Activated B cell treated with CpG ODN at 0.5 μM for 24 hours (primary cell): ENCODE measurements at regions of chr13 and their contacts with region 1.

Region 1: GRCh38 chr13:40770934-40771618 is at the start of gene MRPS31:
- DNase-seq: peak; percentile 94
- ATAC-seq: peak; percentile 100
- H3K4me3 Mint-ChIP-seq: peak within 1 kb of the TSS; percentile 98
- H3K27ac Mint-ChIP-seq: peak within 1 kb of the TSS; percentile 94
- H3K4me1 Mint-ChIP-seq: peaks cover 30% of the 10 kb centered on the region
- H3K27me3 Mint-ChIP-seq: no peaks in the 10 kb centered on the region
- CTCF ChIP-seq: no peak
- total RNA-seq, gene MRPS31: 29.4 and 30.5 TPM in 2 replicates

Region 2: GRCh38 chr13:39037880-39038568 is 1733.1 kb before region 1 on chr13 and contains the starts of genes NHLRC3 and PROSER1:
- CTCF ChIA-PET with region 1: no interaction called
- POLR2A ChIA-PET with region 1: no interaction called
- intact Hi-C with region 1: loop called (anchors 1 kb)
- DNase-seq: peak; percentile 73
- ATAC-seq: peak; percentile 78
- H3K4me3 Mint-ChIP-seq: peak within 1 kb of the TSS; percentile 87
- H3K27ac Mint-ChIP-seq: peak within 1 kb of the TSS; percentile 99
- H3K4me1 Mint-ChIP-seq: peaks cover 47% of the 10 kb centered on the region
- H3K27me3 Mint-ChIP-seq: no peaks in the 10 kb centered on the region
- CTCF ChIP-seq: no peak
- total RNA-seq, gene NHLRC3: 17.3 and 24.6 TPM in 2 replicates
- total RNA-seq, gene PROSER1: 57.3 and 57.8 TPM in 2 replicates

Region 3: GRCh38 chr13:40401911-40402776 is 368.9 kb before region 1 on chr13:
- CTCF ChIA-PET with region 1: no interaction called
- POLR2A ChIA-PET with region 1: no interaction called
- intact Hi-C with region 1: loop called (anchors 10 kb)
- DNase-seq: peak; percentile 51
- ATAC-seq: peak; percentile 100
- H3K4me3 Mint-ChIP-seq: peak overlapping the region; percentile 71
- H3K27ac Mint-ChIP-seq: peak overlapping the region; percentile 82
- H3K4me1 Mint-ChIP-seq: peaks cover 29% of the 10 kb centered on the region
- H3K27me3 Mint-ChIP-seq: no peaks in the 10 kb centered on the region
- CTCF ChIP-seq: no peak

Region 4: DNA sequence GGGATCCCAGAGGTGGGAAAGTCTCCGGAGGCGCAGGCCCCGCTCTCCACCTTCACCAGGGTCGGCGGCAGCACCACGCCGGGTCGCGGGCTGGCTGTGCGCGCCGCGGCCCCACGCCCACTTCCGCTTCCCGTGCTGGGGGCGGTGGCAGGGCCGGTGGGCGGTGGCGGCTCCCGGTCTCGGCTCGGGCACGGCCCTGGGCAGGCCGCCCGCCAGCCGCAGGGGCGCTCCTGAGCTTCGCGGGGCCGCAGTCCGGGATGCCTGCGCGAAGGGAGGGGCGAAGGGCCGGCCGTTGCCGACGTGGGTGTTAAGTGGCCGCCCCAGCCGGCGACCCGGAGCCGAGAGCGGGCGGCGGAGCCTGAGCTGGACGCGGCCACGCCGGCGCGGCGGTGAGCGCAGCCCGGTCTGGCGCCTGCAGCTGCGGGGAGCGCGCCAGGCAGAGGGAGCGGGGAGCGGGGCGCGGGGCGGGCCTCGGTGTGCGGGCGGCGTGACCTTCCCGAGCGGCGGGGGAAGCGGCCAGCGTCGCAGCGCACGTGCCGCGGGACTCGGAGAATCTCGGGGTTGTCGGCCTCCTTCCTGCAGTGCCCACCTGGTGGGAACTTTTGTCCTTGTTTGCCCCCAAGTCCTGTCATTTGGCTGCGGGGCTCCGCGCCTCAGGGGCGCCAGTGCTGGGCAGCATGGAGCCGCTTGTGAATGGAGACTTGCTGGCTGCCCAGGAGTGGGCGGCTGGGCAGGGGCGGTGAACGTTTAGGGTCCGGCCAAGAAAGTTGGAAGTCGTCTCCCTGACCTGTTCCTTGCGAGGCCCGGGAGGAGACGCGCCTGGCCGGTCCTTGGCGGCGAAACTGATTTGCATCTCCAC is 18.4 kb after region 1 on chr13 and contains the start of gene SLC25A15:
- CTCF ChIA-PET with region 1: no interaction called
- POLR2A ChIA-PET with region 1: interaction called, 4 read pairs
- intact Hi-C with region 1: loop called (anchors 1 kb)
- DNase-seq: peak; percentile 82
- ATAC-seq: peak; percentile 95
- H3K4me3 Mint-ChIP-seq: peak within 1 kb of the TSS; percentile 83
- H3K27ac Mint-ChIP-seq: peak within 1 kb of the TSS; percentile 53
- H3K4me1 Mint-ChIP-seq: peaks cover 9% of the 10 kb centered on the region
- H3K27me3 Mint-ChIP-seq: no peaks in the 10 kb centered on the region
- CTCF ChIP-seq: no peak
- total RNA-seq, gene SLC25A15: 4.6 and 4.9 TPM in 2 replicates

Region 5: DNA sequence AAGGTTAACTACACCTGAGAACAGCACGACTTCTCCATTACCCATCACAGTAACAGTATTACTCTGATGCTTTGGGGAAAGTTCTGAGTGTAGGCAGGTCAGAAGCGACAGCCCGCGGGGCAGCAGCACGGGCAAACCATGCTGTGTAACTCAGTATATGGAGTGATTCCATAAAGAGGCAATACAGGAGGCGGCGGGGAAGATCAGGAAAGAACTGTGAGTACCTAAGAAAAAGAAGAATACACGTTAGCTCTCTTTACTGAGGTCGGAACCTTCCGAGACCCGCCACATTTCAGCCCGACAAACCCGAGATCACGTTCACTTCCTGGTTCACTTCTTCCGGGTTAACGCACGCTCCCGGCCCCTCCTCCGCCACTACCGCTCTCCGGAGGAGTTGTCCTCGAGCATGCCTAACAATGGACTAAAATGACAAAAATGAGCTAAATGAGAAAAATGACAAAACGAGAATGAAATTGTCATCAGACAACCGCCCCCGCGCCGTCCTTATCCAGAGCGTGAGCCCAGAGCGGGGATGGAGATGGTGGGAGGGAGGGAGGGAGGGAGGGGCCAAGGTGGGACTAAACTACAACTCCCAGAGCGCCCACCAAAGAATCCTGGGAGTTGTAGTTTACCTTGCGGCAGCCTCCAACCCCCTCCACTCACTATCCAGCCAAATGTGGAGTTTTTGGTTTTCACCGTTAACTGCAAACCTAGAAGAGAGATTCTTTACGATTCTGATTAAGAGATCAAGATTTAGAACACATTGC is 492.4 kb after region 1 on chr13 and contains the start of gene MTRF1:
- CTCF ChIA-PET with region 1: no interaction called
- POLR2A ChIA-PET with region 1: no interaction called
- intact Hi-C with region 1: loop called (anchors 2 kb)
- DNase-seq: peak; percentile 72
- ATAC-seq: peak; percentile 93
- H3K4me3 Mint-ChIP-seq: peak within 1 kb of the TSS; percentile 96
- H3K27ac Mint-ChIP-seq: peak within 1 kb of the TSS; percentile 99
- H3K4me1 Mint-ChIP-seq: peaks cover 17% of the 10 kb centered on the region
- H3K27me3 Mint-ChIP-seq: no peaks in the 10 kb centered on the region
- CTCF ChIP-seq: no peak
- total RNA-seq, gene MTRF1: 22.2 and 26.7 TPM in 2 replicates